MCF 10A (cell line): ENCODE measurements at regions of chr12 and their contacts with region 1.

Region 1: GRCh38 chr12:19223018-19223417 is 93.5 kb downstream of the PLEKHA5 start:
- DNase-seq: peak; percentile 47
- H3K4me3 Mint-ChIP-seq: no peak overlapping the region
- H3K27ac Mint-ChIP-seq: peak overlapping the region; percentile 64
- H3K4me1 Mint-ChIP-seq: peaks cover 26% of the 10 kb centered on the region
- H3K27me3 Mint-ChIP-seq: no peaks in the 10 kb centered on the region
- CTCF ChIP-seq: peak; percentile 31

Region 2: GRCh38 chr12:19181666-19182426 is 41.2 kb before region 1 on chr12:
- CTCF ChIA-PET with region 1: interaction called, 3 read pairs
- POLR2A ChIA-PET with region 1: no interaction called
- intact Hi-C with region 1: loop called (anchors 2 kb)
- DNase-seq: no peak
- H3K4me3 Mint-ChIP-seq: no peak overlapping the region
- H3K27ac Mint-ChIP-seq: no peak overlapping the region
- H3K4me1 Mint-ChIP-seq: peaks cover 5% of the 10 kb centered on the region
- H3K27me3 Mint-ChIP-seq: no peaks in the 10 kb centered on the region
- CTCF ChIP-seq: peak; percentile 21

Region 3: GRCh38 chr12:19236656-19237055 is 13.6 kb after region 1 on chr12:
- CTCF ChIA-PET with region 1: interaction called, 13 read pairs
- POLR2A ChIA-PET with region 1: interaction called, 4 read pairs
- intact Hi-C with region 1: no loop called
- DNase-seq: peak; percentile 29
- H3K4me3 Mint-ChIP-seq: no peak overlapping the region
- H3K27ac Mint-ChIP-seq: no peak overlapping the region
- H3K4me1 Mint-ChIP-seq: peaks cover 19% of the 10 kb centered on the region
- H3K27me3 Mint-ChIP-seq: no peaks in the 10 kb centered on the region
- CTCF ChIP-seq: no peak

Region 4: DNA sequence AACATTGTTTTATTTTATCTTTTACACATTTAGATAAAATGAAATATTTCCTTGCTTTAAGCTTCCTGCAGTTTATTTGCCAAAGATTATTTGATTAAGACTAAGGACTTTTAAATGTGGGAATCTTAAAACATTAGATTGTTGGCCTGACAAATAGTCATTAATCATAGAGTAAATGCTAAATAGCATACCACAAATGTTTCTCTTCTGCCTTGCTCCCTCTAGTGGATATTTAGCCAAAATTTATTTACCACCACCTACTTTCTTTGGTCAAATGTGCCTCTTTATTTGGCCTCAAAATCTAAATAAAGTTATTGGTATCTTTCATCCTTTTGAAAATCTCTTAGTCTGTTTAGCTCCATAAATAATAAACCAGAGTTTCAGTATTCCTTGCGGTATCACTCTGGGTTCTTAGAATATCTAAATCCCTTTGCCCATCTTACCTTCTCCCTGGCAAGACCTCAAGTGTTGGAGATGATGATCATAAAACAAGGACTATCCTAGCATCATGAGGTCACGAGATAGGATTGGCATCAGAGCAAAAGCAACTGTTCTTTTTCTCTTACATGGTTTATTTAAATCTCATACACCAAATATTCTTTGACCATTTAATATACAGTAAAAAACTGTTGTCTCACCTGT is 65.7 kb after region 1 on chr12:
- CTCF ChIA-PET with region 1: no interaction called
- POLR2A ChIA-PET with region 1: no interaction called
- intact Hi-C with region 1: no loop called
- DNase-seq: peak; percentile 46
- H3K4me3 Mint-ChIP-seq: no peak overlapping the region
- H3K27ac Mint-ChIP-seq: no peak overlapping the region
- H3K4me1 Mint-ChIP-seq: no peaks in the 10 kb centered on the region
- H3K27me3 Mint-ChIP-seq: no peaks in the 10 kb centered on the region
- CTCF ChIP-seq: peak; percentile 46